Naive thymus-derived CD4-positive, alpha-beta T cell (primary cell): ENCODE measurements at regions of chr6 and their contacts with region 1.

Region 1: GRCh38 chr6:20366091-20366832 is 35.4 kb upstream of the E2F3 start:
- DNase-seq: peak in 8 of 9 donors; percentile 25 to 79 (median 66)
- ATAC-seq: peak; percentile 82
- H3K4me3 ChIP-seq: peak overlapping the region; percentile 15
- H3K4me3 Mint-ChIP-seq: peak overlapping the region; percentile 79 to 92 (median 84)
- H3K27ac ChIP-seq: peak overlapping the region; percentile 65
- H3K27ac Mint-ChIP-seq: peak overlapping the region; percentile 91 to 99 (median 97)
- H3K4me1 ChIP-seq: peaks cover 55 to 56% of the 10 kb centered on the region in 2 donors
- H3K4me1 Mint-ChIP-seq: peaks cover 48 to 73% (median 65%) of the 10 kb centered on the region in 7 donors
- H3K27me3 ChIP-seq: no peaks in the 10 kb centered on the region
- H3K27me3 Mint-ChIP-seq: no peaks in the 10 kb centered on the region

Region 2: DNA sequence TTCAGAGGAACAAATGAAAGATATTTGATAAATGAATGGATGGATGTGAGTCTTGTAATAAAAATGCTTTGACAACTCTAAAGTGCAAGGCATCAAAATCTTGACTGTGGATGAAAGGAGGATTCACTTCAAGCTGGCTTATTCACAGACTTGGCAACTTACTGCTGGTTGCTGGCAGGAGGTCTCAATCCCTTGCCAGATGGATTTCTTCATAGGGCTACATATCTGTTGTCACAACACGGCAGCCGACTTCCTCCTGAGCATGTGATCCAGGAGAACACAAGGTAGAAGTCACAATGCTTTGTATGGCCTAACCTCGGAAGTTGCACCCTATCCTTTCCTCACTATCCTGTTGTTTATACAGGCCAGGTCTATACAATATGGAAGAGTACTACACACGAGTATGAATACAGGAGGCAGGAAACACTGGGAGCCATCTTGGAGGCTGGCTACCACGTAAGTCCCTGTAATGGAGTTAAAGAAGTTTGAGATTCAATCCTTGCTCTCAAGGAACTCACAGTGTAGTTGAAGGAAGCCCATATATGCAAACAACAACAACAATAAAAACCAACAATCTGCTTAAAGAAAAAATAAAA is 431.2 kb before region 1 on chr6:
- CTCF ChIA-PET with region 1: no interaction called
- POLR2A ChIA-PET with region 1: no interaction called
- intact Hi-C with region 1: no loop called
- DNase-seq: no peak
- ATAC-seq: no peak
- H3K4me3 ChIP-seq: no peak overlapping the region
- H3K4me3 Mint-ChIP-seq: no peak overlapping the region
- H3K27ac ChIP-seq: no peak overlapping the region
- H3K27ac Mint-ChIP-seq: no peak overlapping the region
- H3K4me1 ChIP-seq: no peaks in the 10 kb centered on the region
- H3K4me1 Mint-ChIP-seq: peaks cover 0 to 1% (median 0%) of the 10 kb centered on the region in 7 donors
- H3K27me3 ChIP-seq: no peaks in the 10 kb centered on the region
- H3K27me3 Mint-ChIP-seq: peaks cover 0 to 5% (median 3%) of the 10 kb centered on the region in 5 donors

Region 3: GRCh38 chr6:20291764-20292580 is 74.3 kb before region 1 on chr6:
- CTCF ChIA-PET with region 1: interaction called, 10 read pairs
- POLR2A ChIA-PET with region 1: interaction called, 5 read pairs
- intact Hi-C with region 1: loop called in 1 of 2 experiments (anchors 1 kb)
- DNase-seq: peak; percentile 36 to 72 (median 62)
- ATAC-seq: peak; percentile 94
- H3K4me3 ChIP-seq: no peak overlapping the region
- H3K4me3 Mint-ChIP-seq: peak overlapping the region in 5 of 10 donors; percentile 1 to 54 (median 44)
- H3K27ac ChIP-seq: no peak overlapping the region
- H3K27ac Mint-ChIP-seq: peak overlapping the region in 4 of 9 donors; percentile 3 to 44 (median 22)
- H3K4me1 ChIP-seq: peaks cover 8 to 15% of the 10 kb centered on the region in 2 donors
- H3K4me1 Mint-ChIP-seq: peaks cover 6 to 34% (median 25%) of the 10 kb centered on the region in 7 donors
- H3K27me3 ChIP-seq: no peaks in the 10 kb centered on the region
- H3K27me3 Mint-ChIP-seq: peaks cover 0 to 6% (median 0%) of the 10 kb centered on the region in 5 donors

Region 4: DNA sequence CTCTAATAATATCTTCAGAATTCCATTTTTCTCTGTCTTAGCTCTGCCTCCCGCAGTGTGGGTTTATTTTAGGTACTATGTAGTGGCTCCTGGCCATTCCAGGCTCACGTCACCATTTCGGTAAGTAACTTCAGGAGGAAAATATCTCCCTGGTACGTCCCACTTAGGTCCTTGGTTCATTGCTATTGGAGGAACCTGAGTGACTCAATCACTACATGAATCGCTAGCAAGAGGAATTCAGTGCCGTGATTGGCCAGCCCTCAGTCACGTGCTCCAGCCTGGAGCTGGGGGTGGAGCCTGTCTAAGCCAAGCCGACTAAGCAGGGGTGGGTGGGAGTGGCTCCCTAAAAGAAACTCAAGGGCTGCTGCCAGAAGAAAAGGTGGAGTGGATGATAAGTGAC is 31.9 kb before region 1 on chr6:
- CTCF ChIA-PET with region 1: interaction called, 13 read pairs
- POLR2A ChIA-PET with region 1: interaction called, 51 read pairs
- intact Hi-C with region 1: loop called (anchors 1 kb)
- DNase-seq: no peak
- ATAC-seq: no peak
- H3K4me3 ChIP-seq: no peak overlapping the region
- H3K4me3 Mint-ChIP-seq: no peak overlapping the region
- H3K27ac ChIP-seq: no peak overlapping the region
- H3K27ac Mint-ChIP-seq: no peak overlapping the region
- H3K4me1 ChIP-seq: peaks cover 0 to 11% of the 10 kb centered on the region in 2 donors
- H3K4me1 Mint-ChIP-seq: peaks cover 12 to 39% (median 33%) of the 10 kb centered on the region in 7 donors
- H3K27me3 ChIP-seq: no peaks in the 10 kb centered on the region
- H3K27me3 Mint-ChIP-seq: peaks cover 0 to 12% (median 0%) of the 10 kb centered on the region in 5 donors

Region 5: DNA sequence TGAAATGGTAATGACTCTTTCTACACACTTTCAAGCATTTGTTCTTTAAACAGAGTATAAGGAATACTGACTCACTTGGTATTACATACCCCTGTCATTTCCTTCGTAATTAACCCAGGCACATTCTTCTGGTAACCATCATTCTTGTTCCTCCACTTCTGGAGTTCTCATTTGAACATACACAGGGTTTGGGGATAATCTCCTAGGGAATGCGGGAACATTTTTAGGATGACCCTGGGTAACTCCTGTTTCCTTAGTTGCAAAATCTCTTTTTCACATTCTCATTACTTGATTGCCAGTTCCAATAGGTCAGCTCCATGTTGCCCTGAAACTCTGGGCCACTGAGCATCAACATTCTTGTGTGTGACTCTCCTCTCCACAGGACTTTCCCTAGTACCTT is 16.0 kb before region 1 on chr6:
- CTCF ChIA-PET with region 1: interaction called, 6 read pairs
- POLR2A ChIA-PET with region 1: interaction called, 47 read pairs
- intact Hi-C with region 1: no loop called
- DNase-seq: no peak
- ATAC-seq: no peak
- H3K4me3 ChIP-seq: no peak overlapping the region
- H3K4me3 Mint-ChIP-seq: no peak overlapping the region
- H3K27ac ChIP-seq: no peak overlapping the region
- H3K27ac Mint-ChIP-seq: peak overlapping the region in 1 of 9 donors; percentile 37
- H3K4me1 ChIP-seq: no peaks in the 10 kb centered on the region
- H3K4me1 Mint-ChIP-seq: peaks cover 0 to 23% (median 0%) of the 10 kb centered on the region in 7 donors
- H3K27me3 ChIP-seq: no peaks in the 10 kb centered on the region
- H3K27me3 Mint-ChIP-seq: peaks cover 0 to 10% (median 0%) of the 10 kb centered on the region in 5 donors

Region 6: GRCh38 chr6:20386218-20386617 is 20.0 kb after region 1 on chr6:
- CTCF ChIA-PET with region 1: interaction called, 5 read pairs
- POLR2A ChIA-PET with region 1: interaction called, 74 read pairs
- intact Hi-C with region 1: no loop called
- DNase-seq: no peak
- ATAC-seq: no peak
- H3K4me3 ChIP-seq: no peak overlapping the region
- H3K4me3 Mint-ChIP-seq: no peak overlapping the region
- H3K27ac ChIP-seq: no peak overlapping the region
- H3K27ac Mint-ChIP-seq: no peak overlapping the region
- H3K4me1 ChIP-seq: no peaks in the 10 kb centered on the region
- H3K4me1 Mint-ChIP-seq: peaks cover 0 to 7% (median 4%) of the 10 kb centered on the region in 7 donors
- H3K27me3 ChIP-seq: no peaks in the 10 kb centered on the region
- H3K27me3 Mint-ChIP-seq: peaks cover 0 to 8% (median 0%) of the 10 kb centered on the region in 5 donors